ENCODE measurements at regions of chr3 and their contacts with region 1.

Region 1: GRCh38 chr3:47824541-47825473 is 21.9 kb downstream of the DHX30 start:
- DNase-seq: peak; percentile 88
- ATAC-seq: peak; percentile 98
- H3K4me3 Mint-ChIP-seq: peak overlapping the region; percentile 90
- H3K27ac Mint-ChIP-seq: peak overlapping the region; percentile 80
- H3K4me1 Mint-ChIP-seq: peaks cover 36% of the 10 kb centered on the region
- H3K27me3 Mint-ChIP-seq: no peaks in the 10 kb centered on the region

Region 2: GRCh38 chr3:47522082-47522987 is 302.5 kb before region 1 on chr3:
- CTCF ChIA-PET with region 1: interaction called, 9 read pairs
- POLR2A ChIA-PET with region 1: no interaction called
- intact Hi-C with region 1: loop called in 1 of 2 experiments (anchors 1 kb)
- DNase-seq: peak; percentile 90
- ATAC-seq: peak; percentile 93
- H3K4me3 Mint-ChIP-seq: no peak overlapping the region
- H3K27ac Mint-ChIP-seq: peak overlapping the region; percentile 32
- H3K4me1 Mint-ChIP-seq: peaks cover 5% of the 10 kb centered on the region
- H3K27me3 Mint-ChIP-seq: no peaks in the 10 kb centered on the region

Region 3: GRCh38 chr3:47813551-47814177 is 11.1 kb before region 1 on chr3:
- CTCF ChIA-PET with region 1: interaction called, 18 read pairs
- POLR2A ChIA-PET with region 1: interaction called, 3 read pairs
- intact Hi-C with region 1: no loop called
- DNase-seq: no peak
- ATAC-seq: no peak
- H3K4me3 Mint-ChIP-seq: no peak overlapping the region
- H3K27ac Mint-ChIP-seq: no peak overlapping the region
- H3K4me1 Mint-ChIP-seq: no peaks in the 10 kb centered on the region
- H3K27me3 Mint-ChIP-seq: no peaks in the 10 kb centered on the region

Region 4: GRCh38 chr3:47859956-47860605 is 35.3 kb after region 1 on chr3:
- CTCF ChIA-PET with region 1: no interaction called
- POLR2A ChIA-PET with region 1: no interaction called
- intact Hi-C with region 1: loop called in 1 of 2 experiments (anchors 1 kb)
- DNase-seq: no peak
- ATAC-seq: no peak
- H3K4me3 Mint-ChIP-seq: no peak overlapping the region
- H3K27ac Mint-ChIP-seq: no peak overlapping the region
- H3K4me1 Mint-ChIP-seq: no peaks in the 10 kb centered on the region
- H3K27me3 Mint-ChIP-seq: no peaks in the 10 kb centered on the region

Measured in activated CD4-positive, alpha-beta T cell treated with anti-CD3 and anti-CD28 coated beads for 36 hours (primary cell).